Heart right ventricle (tissue), 16 donors: ENCODE measurements at regions of chr11 and their contacts with region 1.

Region 1: GRCh38 chr11:104089481-104089880 is 53.0 kb downstream of the DDI1 start:
- DNase-seq: no peak
- ATAC-seq: no peak
- H3K4me3 ChIP-seq: no peak overlapping the region
- H3K27ac ChIP-seq: no peak overlapping the region
- H3K4me1 ChIP-seq: peaks cover 0 to 28% (median 14%) of the 10 kb centered on the region in 9 donors
- H3K27me3 ChIP-seq: no peaks in the 10 kb centered on the region
- CTCF ChIP-seq: no peak

Region 2: GRCh38 chr11:103619480-103619879 is 470.0 kb before region 1 on chr11:
- intact Hi-C with region 1: no loop called
- DNase-seq: no peak
- ATAC-seq: no peak
- H3K4me3 ChIP-seq: no peak overlapping the region
- H3K27ac ChIP-seq: no peak overlapping the region
- H3K4me1 ChIP-seq: peaks cover 0 to 2% (median 0%) of the 10 kb centered on the region in 9 donors
- H3K27me3 ChIP-seq: no peaks in the 10 kb centered on the region
- CTCF ChIP-seq: peak in 2 of 9 donors; percentile 15 to 19

Region 3: GRCh38 chr11:103987629-103988594 is 101.6 kb before region 1 on chr11:
- intact Hi-C with region 1: no loop called
- DNase-seq: no peak
- ATAC-seq: no peak
- H3K4me3 ChIP-seq: no peak overlapping the region
- H3K27ac ChIP-seq: no peak overlapping the region
- H3K4me1 ChIP-seq: no peaks in the 10 kb centered on the region
- H3K27me3 ChIP-seq: no peaks in the 10 kb centered on the region
- CTCF ChIP-seq: no peak

Region 4: GRCh38 chr11:104028476-104029263 is 60.8 kb before region 1 on chr11:
- intact Hi-C with region 1: loop called in 1 of 10 experiments (anchors 10 kb)
- DNase-seq: no peak
- ATAC-seq: no peak
- H3K4me3 ChIP-seq: no peak overlapping the region
- H3K27ac ChIP-seq: no peak overlapping the region
- H3K4me1 ChIP-seq: peaks cover 0 to 8% (median 3%) of the 10 kb centered on the region in 9 donors
- H3K27me3 ChIP-seq: no peaks in the 10 kb centered on the region
- CTCF ChIP-seq: no peak